Activated CD4-positive, alpha-beta T cell treated with anti-CD3 and anti-CD28 coated beads, Interleukin-2, amount 10 ng/mL, durations not matched to agents 24 days and 14 days (primary cell): ENCODE measurements at regions of chr4 and their contacts with region 1.

Region 1: DNA sequence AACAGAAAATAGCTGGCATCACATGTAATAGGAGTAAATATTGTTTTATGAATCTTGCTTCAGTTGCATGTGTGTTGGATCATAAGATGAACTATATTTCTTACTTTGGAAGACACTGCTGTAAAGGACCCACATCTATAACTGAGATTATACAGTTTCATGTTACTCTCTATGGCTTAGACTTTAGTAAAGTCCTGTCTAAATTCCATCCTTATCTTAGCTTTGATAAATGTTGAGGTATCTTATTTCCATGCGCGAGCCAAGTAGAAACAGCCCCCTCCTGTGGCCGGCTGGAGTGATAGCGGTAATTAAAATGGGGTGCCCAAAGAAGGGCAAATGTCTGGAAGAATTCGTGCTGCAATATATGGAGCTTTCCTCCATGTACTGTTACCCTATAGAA is 43.0 kb downstream of the CCDC158 start:
- DNase-seq: peak; percentile 79
- H3K4me3 Mint-ChIP-seq: no peak overlapping the region
- H3K27ac Mint-ChIP-seq: no peak overlapping the region
- H3K4me1 Mint-ChIP-seq: no peaks in the 10 kb centered on the region
- H3K27me3 Mint-ChIP-seq: peaks cover 10% of the 10 kb centered on the region

Region 2: DNA sequence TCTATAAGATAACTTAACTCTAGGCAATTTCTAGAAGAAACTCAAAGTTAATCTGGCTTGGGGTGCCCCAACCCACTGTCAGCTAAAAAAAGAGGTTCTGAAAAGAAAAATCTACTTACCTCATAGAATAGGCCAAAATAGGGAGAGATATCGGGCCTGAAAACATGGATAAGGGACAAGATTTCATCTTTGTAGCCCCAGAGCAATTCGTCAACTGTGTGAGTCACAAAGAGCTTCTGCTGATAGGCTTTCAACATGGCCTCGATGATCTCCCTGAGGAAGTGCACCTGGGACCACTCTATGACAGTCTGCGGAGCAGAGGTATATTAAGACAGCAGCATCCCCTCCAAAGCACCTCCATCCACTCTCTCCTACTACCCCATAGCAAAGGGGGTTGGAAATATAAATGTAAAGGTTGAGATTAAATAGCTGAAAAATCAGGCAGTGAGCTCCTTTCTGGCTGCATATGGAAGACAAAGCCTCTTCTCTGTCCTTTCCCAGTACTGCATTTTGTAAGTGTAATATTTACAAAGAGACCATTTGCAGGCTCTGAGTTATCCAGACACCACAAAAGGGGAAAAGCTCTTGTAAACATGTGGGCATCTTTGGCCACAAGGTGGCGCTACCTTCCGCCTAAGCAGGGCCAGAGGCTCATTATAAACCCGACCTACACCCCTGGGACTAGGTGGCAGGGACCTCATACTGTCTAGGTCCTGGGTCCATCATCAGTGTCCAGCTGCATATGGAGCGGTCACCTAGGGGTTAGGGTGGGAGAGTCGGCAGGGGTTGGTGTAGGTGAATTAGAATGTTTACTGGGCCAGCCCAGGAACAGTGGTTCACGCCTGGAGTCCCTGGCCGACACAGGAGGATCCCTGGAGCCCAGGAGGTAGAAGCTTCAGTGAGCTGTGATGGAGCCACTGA is 198.3 kb before region 1 on chr4:
- intact Hi-C with region 1: loop called (anchors 1 kb)
- DNase-seq: peak; percentile 93
- H3K4me3 Mint-ChIP-seq: no peak overlapping the region
- H3K27ac Mint-ChIP-seq: no peak overlapping the region
- H3K4me1 Mint-ChIP-seq: no peaks in the 10 kb centered on the region
- H3K27me3 Mint-ChIP-seq: no peaks in the 10 kb centered on the region

Region 3: GRCh38 chr4:76279472-76279871 is 98.4 kb before region 1 on chr4:
- intact Hi-C with region 1: loop called (anchors 1 kb)
- DNase-seq: peak; percentile 70
- H3K4me3 Mint-ChIP-seq: no peak overlapping the region
- H3K27ac Mint-ChIP-seq: no peak overlapping the region
- H3K4me1 Mint-ChIP-seq: no peaks in the 10 kb centered on the region
- H3K27me3 Mint-ChIP-seq: peaks cover 19% of the 10 kb centered on the region

Region 4: DNA sequence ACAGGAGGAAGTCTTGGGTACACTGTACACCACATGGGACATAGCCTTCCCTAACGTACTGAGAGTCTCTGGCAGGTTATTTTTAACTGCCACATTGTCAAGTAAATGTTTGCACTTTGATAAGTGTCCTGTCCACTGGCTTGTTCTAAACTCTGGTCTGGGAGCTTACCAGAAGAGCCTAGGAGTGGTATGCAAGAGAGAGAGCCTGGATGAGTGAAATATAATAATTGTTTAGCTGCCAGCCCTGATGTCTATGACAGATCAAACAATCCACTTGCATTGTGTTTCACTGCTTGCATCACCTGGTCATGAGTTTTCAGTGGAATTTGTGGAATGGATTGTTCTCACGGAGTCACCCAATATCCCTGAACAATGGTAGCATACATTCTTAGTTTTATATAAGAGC is 148.7 kb after region 1 on chr4:
- intact Hi-C with region 1: no loop called
- DNase-seq: no peak
- H3K4me3 Mint-ChIP-seq: no peak overlapping the region
- H3K27ac Mint-ChIP-seq: no peak overlapping the region
- H3K4me1 Mint-ChIP-seq: no peaks in the 10 kb centered on the region
- H3K27me3 Mint-ChIP-seq: peaks cover 23% of the 10 kb centered on the region